ENCODE measurements at regions of chr16 and their contacts with region 1.

Region 1: DNA sequence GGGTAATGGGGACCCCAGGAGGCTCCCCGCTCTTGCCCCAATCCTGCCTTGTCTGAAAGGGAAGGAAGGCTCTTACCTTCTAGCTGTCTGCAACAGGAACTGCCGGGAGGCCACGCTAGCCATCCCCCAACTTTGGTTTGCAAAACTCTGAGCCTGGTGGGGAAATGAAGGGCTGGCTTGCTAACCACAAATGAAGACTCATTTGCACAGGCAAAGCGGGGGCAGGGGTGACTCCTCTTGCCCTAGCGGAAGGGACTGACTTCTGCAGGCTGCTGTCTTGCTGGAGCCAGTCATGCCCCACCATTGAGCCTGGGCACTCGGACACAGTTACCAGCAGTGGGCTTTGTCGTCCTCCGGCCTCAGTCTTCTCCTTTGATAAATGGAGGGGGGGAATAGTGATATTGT is 52.6 kb downstream of the PLCG2 start:
- DNase-seq: peak; percentile 72 to 79
- ATAC-seq: peak; percentile 75 to 92 (median 85)
- H3K4me3 ChIP-seq: peak overlapping the region; percentile 43
- H3K4me3 Mint-ChIP-seq: peak overlapping the region; percentile 72
- H3K27ac ChIP-seq: peak overlapping the region; percentile 92
- H3K27ac Mint-ChIP-seq: peak overlapping the region; percentile 96 to 98
- H3K4me1 ChIP-seq: peaks cover 98% of the 10 kb centered on the region
- H3K4me1 Mint-ChIP-seq: peaks cover 76 to 84% of the 10 kb centered on the region in 2 donors
- H3K27me3 ChIP-seq: no peaks in the 10 kb centered on the region
- H3K27me3 Mint-ChIP-seq: no peaks in the 10 kb centered on the region
- CTCF ChIP-seq: peak; percentile 25

Region 2: DNA sequence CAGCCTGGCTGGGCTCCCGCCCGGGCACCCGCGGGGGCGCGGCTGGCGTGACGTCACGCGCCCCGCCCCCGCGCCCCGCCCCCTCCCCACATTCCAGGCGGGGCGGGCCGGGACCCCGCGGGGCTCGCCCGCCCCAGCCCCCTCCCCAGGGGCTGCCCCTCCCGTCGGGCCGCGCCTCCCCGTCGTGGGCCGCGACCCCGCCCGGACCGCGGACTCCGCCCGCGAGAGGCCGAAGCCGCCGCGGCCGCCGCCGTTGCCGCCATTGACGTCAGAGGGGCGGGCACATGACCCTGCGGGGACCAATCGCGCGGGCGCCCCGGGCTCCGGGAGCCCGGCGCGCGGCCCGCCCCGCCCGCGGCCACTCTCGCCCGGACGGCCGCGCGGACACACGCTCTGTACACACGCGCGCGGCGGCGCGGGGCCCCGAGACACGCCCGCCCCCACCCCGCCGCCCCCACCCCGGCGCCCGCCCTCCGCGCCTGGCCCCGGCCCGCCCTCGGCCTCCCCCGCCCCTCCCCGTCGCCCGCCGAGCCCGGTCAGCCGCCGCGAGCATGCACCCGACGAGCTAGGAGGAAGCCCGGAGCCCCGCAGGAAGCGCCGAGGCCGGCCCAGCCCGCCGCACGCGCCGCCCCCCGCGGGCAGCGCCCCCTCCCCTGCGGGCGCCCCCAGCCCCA is 387.1 kb before region 1 on chr16 and contains the start of gene CMIP:
- intact Hi-C with region 1: loop called (anchors 10 kb)
- DNase-seq: peak; percentile 90 to 91
- ATAC-seq: peak; percentile 67 to 89 (median 79)
- H3K4me3 ChIP-seq: peak within 1 kb of the TSS; percentile 74
- H3K4me3 Mint-ChIP-seq: peak within 1 kb of the TSS; percentile 93
- H3K27ac ChIP-seq: peak within 1 kb of the TSS; percentile 88
- H3K27ac Mint-ChIP-seq: peak within 1 kb of the TSS; percentile 91 to 93
- H3K4me1 ChIP-seq: peaks cover 48% of the 10 kb centered on the region
- H3K4me1 Mint-ChIP-seq: peaks cover 45 to 53% of the 10 kb centered on the region in 2 donors
- H3K27me3 ChIP-seq: no peaks in the 10 kb centered on the region
- H3K27me3 Mint-ChIP-seq: no peaks in the 10 kb centered on the region
- CTCF ChIP-seq: no peak
- total RNA-seq, gene CMIP: 88.2 to 115 (median 91.5) TPM

Region 3: GRCh38 chr16:81778861-81779535 is 52.7 kb before region 1 on chr16 and contains the start of gene PLCG2:
- intact Hi-C with region 1: loop called (anchors 5 kb)
- DNase-seq: peak; percentile 78 to 88
- ATAC-seq: peak; percentile 96 to 99 (median 98)
- H3K4me3 ChIP-seq: peak within 1 kb of the TSS; percentile 90
- H3K4me3 Mint-ChIP-seq: peak within 1 kb of the TSS; percentile 94
- H3K27ac ChIP-seq: peak within 1 kb of the TSS; percentile 68
- H3K27ac Mint-ChIP-seq: peak within 1 kb of the TSS; percentile 85 to 89
- H3K4me1 ChIP-seq: peaks cover 51% of the 10 kb centered on the region
- H3K4me1 Mint-ChIP-seq: peaks cover 52 to 60% of the 10 kb centered on the region in 2 donors
- H3K27me3 ChIP-seq: no peaks in the 10 kb centered on the region
- H3K27me3 Mint-ChIP-seq: no peaks in the 10 kb centered on the region
- CTCF ChIP-seq: no peak
- total RNA-seq, gene PLCG2: 250 to 298 (median 285) TPM

Region 4: GRCh38 chr16:81798311-81799137 is 33.2 kb before region 1 on chr16:
- intact Hi-C with region 1: loop called (anchors 5 kb)
- DNase-seq: peak; percentile 29 to 40
- ATAC-seq: peak; percentile 35 to 45 (median 39)
- H3K4me3 ChIP-seq: no peak overlapping the region
- H3K4me3 Mint-ChIP-seq: peak overlapping the region; percentile 67
- H3K27ac ChIP-seq: peak overlapping the region; percentile 93
- H3K27ac Mint-ChIP-seq: peak overlapping the region; percentile 92 to 99
- H3K4me1 ChIP-seq: peaks cover 49% of the 10 kb centered on the region
- H3K4me1 Mint-ChIP-seq: peaks cover 68 to 73% of the 10 kb centered on the region in 2 donors
- H3K27me3 ChIP-seq: no peaks in the 10 kb centered on the region
- H3K27me3 Mint-ChIP-seq: no peaks in the 10 kb centered on the region
- CTCF ChIP-seq: no peak

Region 5: DNA sequence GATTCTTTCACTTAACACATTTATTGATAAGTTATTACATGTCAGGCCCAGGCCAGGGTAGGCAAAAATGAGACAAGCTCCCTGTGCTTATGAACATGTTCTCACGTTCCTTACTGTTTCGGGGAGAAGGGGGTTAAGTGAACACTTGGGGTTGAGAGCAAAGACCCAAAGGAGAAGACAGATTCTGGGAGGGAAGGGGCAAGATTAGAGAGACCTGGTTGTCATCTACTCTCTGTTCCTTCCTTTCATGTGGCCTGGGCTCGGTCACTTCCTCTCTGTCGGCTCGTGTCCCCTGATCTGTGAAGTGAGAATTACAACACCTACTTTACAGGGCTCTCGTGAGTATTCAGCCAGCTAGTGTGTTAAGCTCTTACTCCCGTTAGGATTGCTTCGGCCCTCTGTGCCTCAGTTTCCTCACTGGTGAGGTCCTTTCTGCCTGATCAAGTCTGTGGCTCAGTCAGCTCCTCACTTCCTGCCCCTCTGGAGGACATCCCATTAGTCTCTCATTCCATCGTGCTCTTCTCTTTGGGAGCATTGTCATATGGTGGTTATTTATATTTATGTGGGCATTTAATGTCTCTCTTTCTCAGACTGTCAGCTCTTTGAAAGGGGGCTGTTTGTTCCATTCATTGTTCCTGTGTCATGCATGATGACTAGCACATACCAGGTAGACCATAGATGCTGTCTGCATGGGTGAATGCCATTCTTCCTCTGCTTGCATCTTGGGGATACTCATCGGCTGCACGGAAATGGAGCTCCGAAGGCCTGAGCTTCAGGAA is 13.7 kb before region 1 on chr16:
- intact Hi-C with region 1: loop called (anchors 1 kb)
- DNase-seq: peak; percentile 68 to 69
- ATAC-seq: peak; percentile 67 to 90 (median 79)
- H3K4me3 ChIP-seq: no peak overlapping the region
- H3K4me3 Mint-ChIP-seq: peak overlapping the region; percentile 82
- H3K27ac ChIP-seq: peak overlapping the region; percentile 99
- H3K27ac Mint-ChIP-seq: peak overlapping the region; percentile 98 to 99
- H3K4me1 ChIP-seq: peaks cover 97% of the 10 kb centered on the region
- H3K4me1 Mint-ChIP-seq: peaks cover 76 to 80% of the 10 kb centered on the region in 2 donors
- H3K27me3 ChIP-seq: no peaks in the 10 kb centered on the region
- H3K27me3 Mint-ChIP-seq: no peaks in the 10 kb centered on the region
- CTCF ChIP-seq: no peak

Measured in natural killer cell (primary cell).